Activated CD4-positive, alpha-beta memory T cell treated with anti-CD3 and anti-CD28 coated beads for 36 hours (primary cell): ENCODE measurements at regions of chr16 and their contacts with region 1.

Region 1: GRCh38 chr16:15704545-15704987 is 54.5 kb downstream of the NDE1 start:
- DNase-seq: peak; percentile 83
- H3K4me3 Mint-ChIP-seq: no peak overlapping the region
- H3K27ac Mint-ChIP-seq: peak overlapping the region; percentile 50
- H3K4me1 Mint-ChIP-seq: peaks cover 12% of the 10 kb centered on the region
- H3K27me3 Mint-ChIP-seq: no peaks in the 10 kb centered on the region

Region 2: DNA sequence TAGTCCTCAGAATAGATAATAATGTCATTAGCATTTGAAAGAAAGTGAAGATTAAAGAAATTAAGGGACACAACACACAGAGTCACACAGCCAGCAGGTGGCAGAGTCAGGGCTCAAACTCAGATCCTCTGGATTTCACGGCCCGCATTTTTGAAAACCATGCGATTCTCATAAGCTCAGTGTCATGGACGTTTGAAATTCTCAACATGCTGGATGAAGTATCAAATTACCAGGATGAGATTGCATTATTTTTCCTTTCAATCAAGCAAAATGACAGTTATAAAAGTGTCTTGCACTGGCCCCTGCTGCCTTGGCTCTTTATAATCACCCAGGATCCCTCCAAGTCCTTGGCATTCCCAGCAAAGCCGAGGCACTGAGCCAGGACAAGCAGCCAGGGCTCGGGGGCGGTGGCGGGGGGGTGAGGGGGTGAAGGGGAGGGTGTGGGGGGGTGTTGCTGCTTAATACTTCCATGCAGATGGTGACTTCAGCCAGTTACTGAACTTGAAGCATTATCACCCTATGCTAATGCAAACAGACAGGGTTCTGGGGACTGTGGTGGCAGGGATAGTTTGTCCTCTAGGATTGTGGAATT is 276.8 kb before region 1 on chr16:
- CTCF ChIA-PET with region 1: interaction called, 14 read pairs
- POLR2A ChIA-PET with region 1: no interaction called
- intact Hi-C with region 1: loop called (anchors 10 kb)
- DNase-seq: peak; percentile 68
- H3K4me3 Mint-ChIP-seq: no peak overlapping the region
- H3K27ac Mint-ChIP-seq: no peak overlapping the region
- H3K4me1 Mint-ChIP-seq: peaks cover 2% of the 10 kb centered on the region
- H3K27me3 Mint-ChIP-seq: peaks cover 2% of the 10 kb centered on the region

Region 3: GRCh38 chr16:15636392-15636873 is 68.1 kb before region 1 on chr16:
- CTCF ChIA-PET with region 1: interaction called, 4 read pairs
- POLR2A ChIA-PET with region 1: no interaction called
- intact Hi-C with region 1: loop called (anchors 5 kb)
- DNase-seq: peak; percentile 15
- H3K4me3 Mint-ChIP-seq: peak overlapping the region; percentile 30
- H3K27ac Mint-ChIP-seq: peak overlapping the region; percentile 94
- H3K4me1 Mint-ChIP-seq: peaks cover 80% of the 10 kb centered on the region
- H3K27me3 Mint-ChIP-seq: no peaks in the 10 kb centered on the region

Region 4: DNA sequence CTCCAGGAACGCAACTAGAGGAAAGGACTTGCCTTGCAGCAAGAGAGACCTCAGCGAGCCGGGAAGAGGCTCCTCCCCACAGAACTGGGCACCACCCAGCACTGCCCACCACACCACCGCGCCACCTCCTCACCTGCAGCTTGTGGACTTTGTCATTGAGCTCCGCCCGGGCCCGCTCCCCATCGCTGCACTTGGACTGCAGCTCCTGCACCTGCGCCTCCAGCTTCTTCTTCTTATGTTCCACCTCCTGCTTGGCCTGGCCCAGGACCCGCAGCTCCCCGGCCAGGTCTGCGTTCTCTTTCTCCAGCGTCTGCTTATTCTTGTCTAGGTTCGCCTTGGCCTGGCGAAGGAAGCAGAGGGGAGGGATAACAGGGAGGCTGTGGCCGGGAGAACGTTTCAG is 22.1 kb after region 1 on chr16:
- CTCF ChIA-PET with region 1: no interaction called
- POLR2A ChIA-PET with region 1: no interaction called
- intact Hi-C with region 1: no loop called
- DNase-seq: no peak
- H3K4me3 Mint-ChIP-seq: no peak overlapping the region
- H3K27ac Mint-ChIP-seq: peak overlapping the region; percentile 33
- H3K4me1 Mint-ChIP-seq: no peaks in the 10 kb centered on the region
- H3K27me3 Mint-ChIP-seq: no peaks in the 10 kb centered on the region

Region 5: DNA sequence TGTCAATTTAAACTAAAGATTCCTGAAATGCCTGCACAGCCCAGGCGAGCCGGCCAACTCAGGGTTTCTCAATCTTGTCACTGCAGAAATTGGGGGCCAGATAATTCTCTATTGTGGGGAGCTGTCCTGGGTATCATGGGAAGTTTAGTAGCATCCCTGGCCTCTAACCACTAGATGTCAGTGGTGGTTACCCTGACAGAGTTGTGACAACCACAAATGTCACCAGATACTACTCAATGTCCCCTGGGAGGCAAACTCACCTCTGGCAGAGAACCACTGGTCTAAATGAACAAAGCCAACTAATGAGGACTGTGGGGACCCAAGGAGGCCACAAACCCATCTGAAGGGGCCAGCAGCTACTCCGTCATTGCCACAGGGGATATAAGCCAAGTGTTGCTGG is 61.3 kb after region 1 on chr16:
- CTCF ChIA-PET with region 1: no interaction called
- POLR2A ChIA-PET with region 1: no interaction called
- intact Hi-C with region 1: no loop called
- DNase-seq: peak; percentile 31
- H3K4me3 Mint-ChIP-seq: no peak overlapping the region
- H3K27ac Mint-ChIP-seq: no peak overlapping the region
- H3K4me1 Mint-ChIP-seq: no peaks in the 10 kb centered on the region
- H3K27me3 Mint-ChIP-seq: peaks cover 14% of the 10 kb centered on the region